Psoas muscle (tissue), 8 donors: ENCODE measurements at regions of chr15 and their contacts with region 1.

Region 1: DNA sequence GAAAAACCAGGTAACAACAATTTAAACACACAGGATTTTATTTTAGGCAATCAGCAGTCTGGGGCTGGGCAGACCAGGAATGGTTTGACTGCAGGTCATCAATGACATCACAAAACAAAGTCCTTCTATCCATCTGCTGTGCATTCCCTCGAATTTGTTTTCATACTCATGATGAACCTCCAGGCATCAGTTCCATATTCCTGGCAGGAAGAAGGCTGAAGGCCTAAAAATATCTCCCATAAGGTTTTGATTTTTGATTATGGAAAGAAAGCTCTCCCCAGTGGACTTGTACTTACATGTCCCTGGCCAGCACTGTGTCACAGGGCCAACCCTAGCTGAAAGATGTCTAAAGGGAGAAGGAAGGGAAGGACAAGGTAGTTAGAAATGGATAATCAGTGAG is 107.4 kb downstream of the PEAK1 start:
- DNase-seq: no peak
- ATAC-seq: no peak
- H3K4me3 ChIP-seq: no peak overlapping the region
- H3K27ac ChIP-seq: no peak overlapping the region
- H3K4me1 ChIP-seq: no peaks in the 10 kb centered on the region
- H3K27me3 ChIP-seq: no peaks in the 10 kb centered on the region
- CTCF ChIP-seq: no peak

Region 2: DNA sequence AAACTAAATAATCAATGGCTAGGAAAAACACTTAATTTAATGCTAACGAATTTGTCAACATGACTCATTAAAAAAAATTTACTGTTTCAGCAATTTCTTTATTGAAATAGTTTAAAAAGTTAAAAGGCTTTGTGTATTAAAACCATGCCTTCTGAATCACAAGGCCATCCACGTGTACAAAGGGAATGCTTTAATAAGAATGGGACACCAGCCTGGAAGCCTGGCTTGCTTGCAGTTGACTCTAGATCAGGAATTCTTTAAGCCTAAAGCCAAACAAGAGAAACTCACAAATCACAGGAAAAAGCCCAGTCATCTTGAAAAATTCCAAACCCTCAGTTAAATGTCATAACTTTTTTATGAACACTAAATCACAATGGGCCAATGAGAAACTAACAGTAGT is 30.2 kb before region 1 on chr15:
- intact Hi-C with region 1: no loop called
- DNase-seq: no peak
- ATAC-seq: peak in 1 of 4 donors; percentile 37
- H3K4me3 ChIP-seq: no peak overlapping the region
- H3K27ac ChIP-seq: no peak overlapping the region
- H3K4me1 ChIP-seq: no peaks in the 10 kb centered on the region
- H3K27me3 ChIP-seq: no peaks in the 10 kb centered on the region
- CTCF ChIP-seq: no peak

Region 3: GRCh38 chr15:77335298-77335697 is 22.8 kb after region 1 on chr15:
- intact Hi-C with region 1: no loop called
- DNase-seq: no peak
- ATAC-seq: peak in 3 of 4 donors; percentile 49 to 69 (median 56)
- H3K4me3 ChIP-seq: no peak overlapping the region
- H3K27ac ChIP-seq: no peak overlapping the region
- H3K4me1 ChIP-seq: peaks cover 13% of the 10 kb centered on the region
- H3K27me3 ChIP-seq: no peaks in the 10 kb centered on the region
- CTCF ChIP-seq: no peak

Region 4: GRCh38 chr15:77352887-77353286 is 40.4 kb after region 1 on chr15:
- intact Hi-C with region 1: loop called in 1 of 2 experiments (anchors 5 kb)
- DNase-seq: no peak
- ATAC-seq: no peak
- H3K4me3 ChIP-seq: no peak overlapping the region
- H3K27ac ChIP-seq: no peak overlapping the region
- H3K4me1 ChIP-seq: peaks cover 11% of the 10 kb centered on the region
- H3K27me3 ChIP-seq: no peaks in the 10 kb centered on the region
- CTCF ChIP-seq: no peak